Endothelial cell of umbilical vein (primary cell): ENCODE measurements at regions of chr16 and their contacts with region 1.

Region 1: GRCh38 chr16:55257966-55258613 is 65.9 kb upstream of the IRX6 start:
- DNase-seq: peak; percentile 53
- H3K4me3 ChIP-seq: no peak overlapping the region
- H3K27ac ChIP-seq: no peak overlapping the region
- H3K4me1 ChIP-seq: no peaks in the 10 kb centered on the region
- H3K27me3 ChIP-seq: no peaks in the 10 kb centered on the region
- CTCF ChIP-seq: peak; percentile 74 to 76
- POLR2A ChIP-seq: no peak

Region 2: DNA sequence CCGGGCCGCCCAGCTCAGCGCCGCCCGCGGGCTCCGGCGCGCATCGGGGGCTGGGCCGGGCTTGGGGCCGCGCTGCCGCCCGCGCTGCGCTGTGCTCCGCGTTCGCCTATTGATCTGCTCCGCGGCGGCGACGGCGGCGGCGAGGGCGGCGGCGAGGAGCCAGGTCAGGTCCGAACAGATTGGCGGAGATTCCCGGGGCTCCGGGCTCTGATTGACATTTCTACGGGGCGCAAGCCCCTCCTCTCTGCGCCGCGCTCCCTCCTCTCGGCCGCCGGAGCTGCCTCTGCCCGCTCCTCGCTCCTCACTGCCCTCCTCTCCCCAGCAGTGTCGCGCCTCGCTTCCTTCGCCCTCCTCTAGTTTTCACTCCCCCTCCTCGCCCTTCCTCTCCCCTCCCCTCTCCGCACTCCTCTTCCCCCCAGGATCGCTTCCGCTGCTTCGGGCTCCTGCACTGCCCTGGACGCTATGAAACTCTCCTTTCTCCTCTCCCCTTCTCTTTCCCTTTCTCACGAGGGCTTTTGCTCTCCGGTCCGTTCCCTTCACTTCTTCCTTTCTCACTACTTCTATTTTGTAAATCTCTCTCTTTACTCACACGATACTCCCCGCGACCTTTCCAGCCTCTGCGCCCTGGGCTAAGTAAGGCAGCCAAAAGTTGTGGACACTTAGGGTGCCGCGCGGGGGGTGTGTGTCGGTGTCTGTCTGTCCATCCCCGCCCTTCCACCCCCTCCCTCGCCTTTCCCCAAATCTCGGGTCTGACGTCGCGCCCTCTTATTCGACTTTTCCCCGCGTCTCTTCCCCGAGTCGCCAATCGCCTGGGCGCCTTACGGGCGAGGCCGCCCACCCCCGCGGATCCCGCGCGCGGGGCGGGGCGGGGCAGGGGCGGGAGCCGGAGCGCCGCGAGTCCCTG is 971.7 kb before region 1 on chr16 and contains the start of gene IRX3:
- CTCF ChIA-PET with region 1: no interaction called
- POLR2A ChIA-PET with region 1: no interaction called
- dilution Hi-C with region 1: no loop called
- intact Hi-C with region 1: loop called (anchors 2 kb)
- DNase-seq: peak; percentile 22
- H3K4me3 ChIP-seq: peak within 1 kb of the TSS; percentile 37 to 50 (median 42)
- H3K27ac ChIP-seq: no peak within 1 kb of the TSS
- H3K4me1 ChIP-seq: peaks cover 8% of the 10 kb centered on the region
- H3K27me3 ChIP-seq: peaks cover 76 to 94% of the 10 kb centered on the region in 2 experiments
- CTCF ChIP-seq: no peak
- POLR2A ChIP-seq: no peak
- total RNA-seq, gene IRX3: not detected in 2 replicates

Region 3: DNA sequence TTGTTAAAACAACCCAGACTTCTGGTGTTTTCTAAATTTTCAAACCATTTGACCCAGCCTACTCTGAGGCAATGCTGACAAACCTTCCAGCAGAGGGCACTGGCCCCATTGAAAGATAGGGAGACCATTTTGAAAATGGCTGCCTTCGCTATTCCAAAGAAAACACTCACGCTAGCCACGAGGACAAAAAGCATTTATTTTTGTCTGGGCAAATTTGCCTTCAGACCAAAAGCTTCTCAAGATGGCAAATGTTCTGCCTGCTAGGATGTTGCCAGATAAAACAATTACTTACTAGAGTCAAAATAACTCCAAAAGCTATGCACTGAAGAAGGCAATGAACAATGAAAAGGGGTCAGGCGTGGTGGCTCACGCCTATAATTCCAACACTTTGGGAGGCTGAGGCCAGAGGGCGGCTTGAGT is 624.1 kb before region 1 on chr16:
- CTCF ChIA-PET with region 1: no interaction called
- POLR2A ChIA-PET with region 1: no interaction called
- dilution Hi-C with region 1: no loop called
- intact Hi-C with region 1: loop called (anchors 1 kb)
- DNase-seq: peak; percentile 21
- H3K4me3 ChIP-seq: no peak overlapping the region
- H3K27ac ChIP-seq: no peak overlapping the region
- H3K4me1 ChIP-seq: no peaks in the 10 kb centered on the region
- H3K27me3 ChIP-seq: no peaks in the 10 kb centered on the region
- CTCF ChIP-seq: peak; percentile 43 to 54
- POLR2A ChIP-seq: no peak

Region 4: DNA sequence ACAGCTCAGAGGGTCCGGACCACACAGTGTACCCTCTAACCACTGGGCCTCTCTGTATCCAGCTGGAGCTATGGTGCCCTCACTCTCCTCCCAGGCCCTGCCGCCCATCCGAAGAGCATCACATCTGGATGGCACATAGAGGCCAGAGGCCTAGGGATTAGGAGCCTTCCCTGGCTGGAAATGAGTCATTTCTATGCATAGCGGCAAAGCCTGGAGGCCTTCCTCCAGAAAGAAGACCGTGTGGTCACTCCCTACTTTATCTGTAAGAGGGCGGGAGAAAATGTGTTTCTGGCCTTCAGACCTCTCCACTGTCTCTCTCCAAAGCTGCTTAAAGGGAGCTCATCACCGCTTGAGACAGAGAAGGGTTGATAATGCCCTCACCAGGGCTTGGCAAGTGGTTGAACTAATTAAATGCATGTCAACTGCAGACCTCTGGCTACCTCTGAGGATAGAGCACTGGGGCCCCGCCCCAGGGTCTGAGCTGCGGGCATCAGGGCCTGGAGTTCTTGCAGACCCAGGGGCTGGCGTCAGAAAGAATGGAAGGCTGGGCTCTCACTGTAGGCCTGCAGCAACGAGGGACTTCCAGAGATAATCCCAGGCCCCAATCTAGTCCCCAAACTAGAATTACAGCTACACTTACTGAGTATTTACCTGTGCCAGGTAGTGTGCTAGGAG is 205.2 kb before region 1 on chr16:
- CTCF ChIA-PET with region 1: no interaction called
- POLR2A ChIA-PET with region 1: no interaction called
- dilution Hi-C with region 1: no loop called
- intact Hi-C with region 1: no loop called
- DNase-seq: no peak
- H3K4me3 ChIP-seq: no peak overlapping the region
- H3K27ac ChIP-seq: no peak overlapping the region
- H3K4me1 ChIP-seq: no peaks in the 10 kb centered on the region
- H3K27me3 ChIP-seq: peaks cover 10 to 12% of the 10 kb centered on the region in 2 experiments
- CTCF ChIP-seq: no peak
- POLR2A ChIP-seq: no peak

Region 5: GRCh38 chr16:55308973-55309372 is 50.9 kb after region 1 on chr16:
- CTCF ChIA-PET with region 1: no interaction called
- POLR2A ChIA-PET with region 1: no interaction called
- dilution Hi-C with region 1: no loop called
- intact Hi-C with region 1: no loop called
- DNase-seq: no peak
- H3K4me3 ChIP-seq: no peak overlapping the region
- H3K27ac ChIP-seq: no peak overlapping the region
- H3K4me1 ChIP-seq: no peaks in the 10 kb centered on the region
- H3K27me3 ChIP-seq: no peaks in the 10 kb centered on the region
- CTCF ChIP-seq: no peak
- POLR2A ChIP-seq: no peak